T-cell (primary cell): ENCODE measurements at regions of chr1 and their contacts with region 1.

Region 1: GRCh38 chr1:8629241-8630091 is 188.0 kb downstream of the RERE start:
- DNase-seq: peak in 2 of 35 experiments; percentile 8 to 14
- ATAC-seq: peak in 2 of 4 experiments; percentile 49 to 75
- H3K4me3 ChIP-seq: no peak overlapping the region
- H3K4me3 Mint-ChIP-seq: peak overlapping the region; percentile 2 to 23 (median 11)
- H3K27ac ChIP-seq: peak overlapping the region; percentile 4
- H3K27ac Mint-ChIP-seq: no peak overlapping the region
- H3K4me1 ChIP-seq: peaks cover 0 to 25% of the 10 kb centered on the region in 2 experiments
- H3K4me1 Mint-ChIP-seq: peaks cover 35 to 59% (median 54%) of the 10 kb centered on the region in 3 donors
- H3K27me3 ChIP-seq: no peaks in the 10 kb centered on the region
- H3K27me3 Mint-ChIP-seq: no peaks in the 10 kb centered on the region

Region 2: GRCh38 chr1:8641377-8641997 is 12.0 kb after region 1 on chr1:
- CTCF ChIA-PET with region 1: no interaction called
- POLR2A ChIA-PET with region 1: interaction called, 4 to 12 read pairs
- DNase-seq: no peak
- ATAC-seq: no peak
- H3K4me3 ChIP-seq: no peak overlapping the region
- H3K4me3 Mint-ChIP-seq: no peak overlapping the region
- H3K27ac ChIP-seq: no peak overlapping the region
- H3K27ac Mint-ChIP-seq: no peak overlapping the region
- H3K4me1 ChIP-seq: peaks cover 0 to 2% of the 10 kb centered on the region in 2 experiments
- H3K4me1 Mint-ChIP-seq: peaks cover 0 to 8% (median 4%) of the 10 kb centered on the region in 3 donors
- H3K27me3 ChIP-seq: no peaks in the 10 kb centered on the region
- H3K27me3 Mint-ChIP-seq: no peaks in the 10 kb centered on the region